AG04450 (cell line): ENCODE measurements at regions of chrX and their contacts with region 1.

Region 1: GRCh38 chrX:108537005-108537404 is 97.4 kb downstream of the COL4A5 start:
- DNase-seq: no peak
- H3K4me3 ChIP-seq: no peak overlapping the region
- H3K27ac ChIP-seq: no peak overlapping the region
- H3K27me3 ChIP-seq: no peaks in the 10 kb centered on the region
- CTCF ChIP-seq: peak; percentile 61

Region 2: DNA sequence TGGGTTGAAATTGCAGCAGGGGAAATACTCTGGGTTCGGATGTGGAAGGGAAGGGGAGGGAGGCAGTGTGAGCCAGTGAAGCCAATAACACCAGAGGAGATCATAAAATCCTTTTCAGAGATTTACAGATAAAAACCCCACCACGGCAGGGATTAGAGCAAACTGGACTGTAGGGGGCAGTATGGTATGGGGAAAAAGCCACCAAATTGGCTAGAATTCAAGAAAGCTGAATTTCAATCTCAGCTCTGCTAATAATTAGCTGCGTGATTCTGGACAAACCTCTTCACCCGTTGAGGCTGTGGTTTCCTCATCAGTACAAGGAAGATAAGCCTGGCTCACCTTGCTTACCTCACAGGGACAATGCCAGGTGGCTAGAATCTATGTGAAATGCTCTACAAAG is 337.3 kb before region 1 on chrX:
- CTCF ChIA-PET with region 1: interaction called, 12 read pairs
- POLR2A ChIA-PET with region 1: no interaction called
- DNase-seq: no peak
- H3K4me3 ChIP-seq: no peak overlapping the region
- H3K27ac ChIP-seq: no peak overlapping the region
- H3K27me3 ChIP-seq: no peaks in the 10 kb centered on the region
- CTCF ChIP-seq: peak; percentile 58

Region 3: GRCh38 chrX:108224727-108225621 is 312.0 kb before region 1 on chrX:
- CTCF ChIA-PET with region 1: interaction called, 29 read pairs
- POLR2A ChIA-PET with region 1: no interaction called
- DNase-seq: no peak
- H3K4me3 ChIP-seq: no peak overlapping the region
- H3K27ac ChIP-seq: no peak overlapping the region
- H3K27me3 ChIP-seq: no peaks in the 10 kb centered on the region
- CTCF ChIP-seq: peak; percentile 56